Esophagus muscularis mucosa (tissue), 4 donors: ENCODE measurements at regions of chr12 and their contacts with region 1.

Region 1: GRCh38 chr12:1093166-1093751 is 102.2 kb downstream of the ERC1 start:
- DNase-seq: no peak
- H3K4me3 ChIP-seq: no peak overlapping the region
- H3K27ac ChIP-seq: no peak overlapping the region
- H3K4me1 ChIP-seq: peaks cover 0 to 25% (median 18%) of the 10 kb centered on the region in 4 donors
- H3K27me3 ChIP-seq: no peaks in the 10 kb centered on the region
- CTCF ChIP-seq: peak; percentile 63 to 81 (median 77)
- EP300 ChIP-seq: no peak
- POLR2A ChIP-seq: no peak

Region 2: GRCh38 chr12:990661-991349 is 102.5 kb before region 1 on chr12 and contains the start of gene ERC1:
- intact Hi-C with region 1: loop called (anchors 5 kb)
- DNase-seq: peak; percentile 96
- H3K4me3 ChIP-seq: peak within 1 kb of the TSS; percentile 88 to 99 (median 98)
- H3K27ac ChIP-seq: peak within 1 kb of the TSS; percentile 95 to 99 (median 99)
- H3K4me1 ChIP-seq: peaks cover 31 to 59% (median 57%) of the 10 kb centered on the region in 4 donors
- H3K27me3 ChIP-seq: no peaks in the 10 kb centered on the region
- CTCF ChIP-seq: peak in 1 of 3 experiments; percentile 15
- EP300 ChIP-seq: no peak
- POLR2A ChIP-seq: peak; percentile 19
- total RNA-seq, gene ERC1: 50.0 to 88.1 (median 59.7) TPM

Region 3: DNA sequence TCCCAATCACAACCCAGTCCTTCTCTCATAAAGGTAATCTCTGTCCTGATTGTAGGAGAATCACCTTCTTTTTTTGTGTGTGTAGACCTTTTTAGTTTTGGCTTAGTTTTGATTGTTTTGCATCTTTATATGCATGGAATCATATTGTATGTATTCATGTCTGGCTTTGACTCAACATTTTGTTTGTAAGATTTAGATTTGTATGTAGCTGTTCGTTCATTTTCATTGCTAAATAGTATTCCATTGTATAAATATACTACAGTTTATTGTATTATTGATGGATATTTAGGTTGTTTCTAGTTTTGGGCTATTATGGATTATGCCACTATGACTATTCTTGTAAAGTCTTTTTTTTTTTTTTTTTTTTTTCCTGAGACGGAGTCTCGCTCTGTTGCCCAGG is 91.8 kb before region 1 on chr12:
- intact Hi-C with region 1: no loop called
- DNase-seq: no peak
- H3K4me3 ChIP-seq: no peak overlapping the region
- H3K27ac ChIP-seq: no peak overlapping the region
- H3K4me1 ChIP-seq: peaks cover 3 to 33% (median 23%) of the 10 kb centered on the region in 4 donors
- H3K27me3 ChIP-seq: no peaks in the 10 kb centered on the region
- CTCF ChIP-seq: no peak
- EP300 ChIP-seq: no peak
- POLR2A ChIP-seq: no peak